Panc1 (cell line): ENCODE measurements at regions of chr15 and their contacts with region 1.

Region 1: DNA sequence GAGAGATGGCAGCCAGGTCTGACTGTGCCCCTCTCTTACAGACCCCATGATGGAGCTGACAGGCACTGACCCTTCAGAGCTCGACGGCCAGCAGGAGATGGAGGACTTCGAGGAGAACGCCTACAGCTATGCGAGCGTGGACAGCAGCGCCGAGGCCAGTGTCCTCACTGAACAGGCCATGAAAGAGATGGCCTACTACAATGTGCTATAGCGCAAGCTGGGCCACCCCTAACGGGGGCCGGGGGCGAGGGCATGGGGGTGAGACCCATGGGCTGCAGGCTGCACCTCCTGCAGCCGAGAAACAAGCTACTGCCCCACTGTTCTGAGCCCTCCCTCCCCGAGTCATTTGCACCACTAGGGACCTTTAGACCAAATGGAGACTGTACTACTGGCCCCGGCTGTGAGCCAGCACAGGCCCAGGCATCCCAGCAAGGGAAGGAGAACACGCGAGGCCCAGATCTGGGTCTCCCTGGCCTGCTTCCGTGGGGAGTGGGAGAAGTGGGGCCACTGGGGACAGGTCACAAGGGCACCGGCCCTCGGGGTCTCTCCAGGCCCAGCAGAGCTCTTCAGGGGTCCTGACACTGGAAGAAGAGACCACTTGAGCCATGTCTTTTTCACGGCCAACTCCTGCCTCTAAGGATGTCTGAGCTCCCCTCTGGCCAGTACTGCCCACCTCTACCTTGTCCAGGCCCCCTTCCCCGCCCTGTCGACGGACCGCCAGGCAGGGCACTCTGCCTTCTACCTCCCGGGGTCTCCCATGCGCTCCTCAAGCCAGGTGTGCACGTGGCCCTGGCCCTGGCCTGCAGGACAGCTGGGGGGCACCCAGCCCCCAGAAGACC is 22.4 kb downstream of the IDH2 start:
- DNase-seq: no peak
- ATAC-seq: no peak; the same call in 1 of the 2 replicates
- H3K4me3 ChIP-seq: no peak overlapping the region
- H3K27ac ChIP-seq: no peak overlapping the region
- H3K4me1 ChIP-seq: no peaks in the 10 kb centered on the region; the same call in 1 of the 2 replicates
- H3K27me3 ChIP-seq: no peaks in the 10 kb centered on the region
- CTCF ChIP-seq: no peak

Region 2: DNA sequence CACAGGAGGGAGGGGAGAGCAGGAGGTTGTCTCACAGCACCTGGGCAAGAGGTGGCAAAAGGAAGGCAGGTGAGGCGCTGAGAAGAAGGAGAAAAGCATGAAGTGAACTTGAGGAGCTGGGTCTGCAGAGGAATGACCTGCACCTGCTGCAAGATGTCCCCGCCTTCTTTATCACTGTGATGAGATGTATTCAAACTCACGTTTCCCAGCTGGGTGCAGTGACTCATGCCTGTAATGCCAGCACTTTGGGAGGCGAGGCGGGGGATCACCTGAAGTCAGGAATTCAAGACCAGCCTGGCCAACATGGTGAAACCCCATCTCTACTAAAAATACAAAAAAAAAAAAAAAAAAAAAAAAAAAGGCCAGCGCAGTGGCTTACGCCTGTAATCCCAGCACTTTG is 100.9 kb before region 1 on chr15:
- CTCF ChIA-PET with region 1: no interaction called
- POLR2A ChIA-PET with region 1: no interaction called
- in situ Hi-C with region 1: no loop called
- intact Hi-C with region 1: no loop called
- DNase-seq: no peak
- ATAC-seq: no peak
- H3K4me3 ChIP-seq: no peak overlapping the region
- H3K27ac ChIP-seq: no peak overlapping the region
- H3K4me1 ChIP-seq: no peaks in the 10 kb centered on the region
- H3K27me3 ChIP-seq: no peaks in the 10 kb centered on the region
- CTCF ChIP-seq: no peak

Region 3: DNA sequence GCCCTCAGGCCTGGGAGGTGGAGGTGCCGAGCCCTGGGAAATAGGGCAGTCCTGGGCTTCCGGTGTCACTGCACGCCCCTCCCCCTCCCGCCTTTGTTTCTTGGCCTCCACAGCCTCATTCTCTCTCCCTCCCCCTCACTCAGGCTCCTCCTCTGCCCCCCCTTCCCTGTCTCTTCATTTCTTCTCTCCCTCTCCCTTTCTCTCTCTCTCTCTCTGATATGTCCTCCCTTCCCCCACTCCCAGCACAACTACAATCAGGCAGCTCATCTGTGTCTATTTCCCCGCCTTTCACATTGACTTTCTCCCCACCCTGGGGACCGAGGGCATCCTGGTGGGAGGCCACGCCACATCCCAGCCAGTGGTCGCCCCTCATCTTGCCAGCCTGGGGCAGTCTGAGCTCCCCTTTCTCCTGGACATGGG is 17.8 kb before region 1 on chr15:
- CTCF ChIA-PET with region 1: interaction called, 10 read pairs
- POLR2A ChIA-PET with region 1: no interaction called
- in situ Hi-C with region 1: no loop called
- intact Hi-C with region 1: no loop called
- DNase-seq: no peak
- ATAC-seq: no peak
- H3K4me3 ChIP-seq: no peak overlapping the region
- H3K27ac ChIP-seq: peak overlapping the region; percentile 31; the same call in 1 of the 2 replicates
- H3K4me1 ChIP-seq: peaks cover 26% of the 10 kb centered on the region
- H3K27me3 ChIP-seq: no peaks in the 10 kb centered on the region
- CTCF ChIP-seq: no peak